HCT116 (cell line): ENCODE measurements at regions of chr2 and their contacts with region 1.

Region 1: DNA sequence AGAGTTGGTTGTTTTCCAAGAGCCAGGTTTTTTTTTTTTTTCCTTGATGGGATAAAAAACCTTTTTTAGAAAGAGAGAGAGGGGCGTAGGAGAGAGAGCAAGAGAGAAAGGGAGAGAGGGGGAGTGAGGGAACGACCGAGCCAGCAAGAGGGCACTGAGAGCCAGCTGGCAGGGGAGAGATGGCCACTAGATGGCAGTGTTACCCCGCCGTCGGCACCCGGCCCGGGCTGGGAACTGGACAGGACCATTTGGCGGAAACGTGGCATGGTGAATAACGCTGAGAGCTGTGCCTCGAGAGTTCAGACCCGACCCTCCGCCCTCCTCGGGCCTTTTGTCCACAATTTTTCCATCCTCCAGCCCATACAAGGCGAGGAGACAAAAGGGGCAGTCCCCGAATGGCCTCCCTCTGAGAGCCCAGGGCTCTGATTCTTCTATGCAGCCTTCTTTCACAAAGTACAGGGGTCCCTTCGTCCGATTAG is 286.7 kb upstream of the VRK2 start:
- DNase-seq: peak; percentile 57
- ATAC-seq: peak; percentile 99
- H3K4me3 ChIP-seq: peak overlapping the region in 1 of 2 experiments; percentile 28; a peak in 2 of 4 replicates
- H3K27ac ChIP-seq: no peak overlapping the region
- H3K4me1 ChIP-seq: peaks cover 0 to 8% of the 10 kb centered on the region in 2 experiments; a peak in 2 of 4 replicates
- H3K27me3 ChIP-seq: no peaks in the 10 kb centered on the region
- CTCF ChIP-seq: peak; percentile 75 to 92 (median 87)
- POLR2A ChIP-seq: no peak
- RAD21 ChIP-seq: peak; percentile 96

Region 2: DNA sequence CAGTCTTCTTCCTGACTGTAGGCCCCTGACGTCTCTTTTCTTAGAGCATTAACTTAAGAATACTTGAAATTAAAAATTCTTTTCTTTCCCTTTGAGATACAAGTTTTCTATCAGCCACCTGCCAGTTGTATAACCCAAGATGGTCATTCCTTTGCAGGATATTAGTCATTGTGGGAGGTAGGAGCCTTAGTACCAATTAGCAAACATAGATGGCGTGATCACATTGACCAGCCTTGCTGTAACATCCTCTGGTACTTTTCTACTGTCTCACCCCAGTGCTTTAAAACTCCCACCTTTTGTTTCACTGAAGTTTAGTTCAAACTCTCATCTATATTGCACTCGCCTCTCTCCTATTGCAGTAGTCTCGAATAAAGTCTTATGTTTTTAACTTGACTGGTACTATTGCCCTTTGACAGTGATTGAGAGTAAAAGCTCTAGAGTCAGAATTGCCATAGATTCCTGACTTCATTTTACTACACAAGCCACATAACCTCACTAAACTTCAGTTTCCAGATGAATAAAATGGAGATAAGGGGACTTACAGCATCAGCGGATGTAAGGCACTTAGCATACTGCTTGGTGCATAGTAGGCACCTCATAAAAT is 360.9 kb after region 1 on chr2:
- CTCF ChIA-PET with region 1: no interaction called
- POLR2A ChIA-PET with region 1: no interaction called
- RAD21 ChIA-PET with region 1: no interaction called
- intact Hi-C with region 1: loop called (anchors 10 kb)
- DNase-seq: no peak
- ATAC-seq: no peak
- H3K4me3 ChIP-seq: no peak overlapping the region
- H3K27ac ChIP-seq: no peak overlapping the region
- H3K4me1 ChIP-seq: peaks cover 7 to 27% of the 10 kb centered on the region in 2 experiments
- H3K27me3 ChIP-seq: no peaks in the 10 kb centered on the region
- CTCF ChIP-seq: no peak
- POLR2A ChIP-seq: no peak
- RAD21 ChIP-seq: no peak

Region 3: DNA sequence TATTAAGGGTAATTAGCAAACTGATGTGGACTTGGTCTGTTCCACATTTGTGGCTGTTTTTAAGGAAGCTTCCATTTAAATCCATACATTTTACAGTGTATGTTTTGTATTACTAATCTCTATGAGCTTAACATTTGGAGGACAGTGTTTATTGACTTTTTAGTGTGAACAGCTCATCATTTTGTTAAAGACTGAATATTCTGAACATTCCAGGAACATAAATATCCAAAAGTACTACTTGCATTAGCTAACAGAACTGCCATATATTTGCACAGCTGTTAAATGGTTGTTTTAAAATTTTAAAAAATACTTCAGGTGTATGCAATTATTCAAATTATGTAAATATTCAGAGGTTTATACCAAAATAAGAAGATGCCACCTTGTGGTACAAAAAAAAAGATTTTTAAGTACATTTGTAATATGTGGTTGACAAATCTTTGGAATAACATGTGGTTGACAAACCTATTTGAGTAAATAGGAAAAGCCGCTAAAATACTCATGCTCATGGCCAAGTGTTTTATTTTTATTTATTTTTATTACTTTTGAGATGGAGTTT is 921.0 kb after region 1 on chr2:
- CTCF ChIA-PET with region 1: no interaction called
- POLR2A ChIA-PET with region 1: no interaction called
- RAD21 ChIA-PET with region 1: no interaction called
- intact Hi-C with region 1: loop called (anchors 10 kb)
- DNase-seq: no peak
- ATAC-seq: no peak
- H3K4me3 ChIP-seq: no peak overlapping the region
- H3K27ac ChIP-seq: no peak overlapping the region
- H3K4me1 ChIP-seq: no peaks in the 10 kb centered on the region
- H3K27me3 ChIP-seq: no peaks in the 10 kb centered on the region
- CTCF ChIP-seq: peak in 2 of 3 experiments; percentile 31 to 43; a peak in 2 of 6 replicates
- POLR2A ChIP-seq: no peak
- RAD21 ChIP-seq: peak; percentile 32; the same call in 1 of the 2 replicates